Endothelial cell of umbilical vein (primary cell): ENCODE measurements at regions of chr14 and their contacts with region 1.

Region 1: DNA sequence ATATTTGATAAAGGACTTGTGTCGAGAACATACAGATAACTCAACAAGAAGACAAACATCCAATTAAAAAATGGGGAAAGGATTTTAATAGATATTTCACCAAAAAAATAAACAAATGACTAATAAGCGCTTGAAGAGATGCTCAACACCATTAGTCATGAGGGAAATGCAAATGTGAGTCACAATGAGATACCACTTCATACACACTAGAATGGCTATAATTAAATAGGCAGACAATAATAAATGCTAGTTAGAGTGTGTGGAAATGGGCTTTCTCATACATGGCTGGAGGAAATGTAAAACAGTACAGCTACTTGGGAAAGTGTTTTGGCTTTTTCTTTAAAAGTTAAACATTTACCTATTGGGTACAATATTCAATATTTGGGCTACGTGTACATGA is 34.8 kb downstream of the DLK1 start:
- DNase-seq: peak; percentile 66
- H3K4me3 ChIP-seq: no peak overlapping the region
- H3K27ac ChIP-seq: peak overlapping the region; percentile 27
- H3K4me1 ChIP-seq: peaks cover 13% of the 10 kb centered on the region
- H3K27me3 ChIP-seq: peaks cover 0 to 2% of the 10 kb centered on the region in 2 experiments
- CTCF ChIP-seq: no peak
- POLR2A ChIP-seq: no peak

Region 2: GRCh38 chr14:100692859-100693558 is 68.5 kb before region 1 on chr14:
- CTCF ChIA-PET with region 1: no interaction called
- POLR2A ChIA-PET with region 1: no interaction called
- dilution Hi-C with region 1: no loop called
- intact Hi-C with region 1: loop called (anchors 1 kb)
- DNase-seq: peak; percentile 87
- H3K4me3 ChIP-seq: no peak overlapping the region
- H3K27ac ChIP-seq: peak overlapping the region; percentile 88
- H3K4me1 ChIP-seq: peaks cover 21% of the 10 kb centered on the region
- H3K27me3 ChIP-seq: no peaks in the 10 kb centered on the region
- CTCF ChIP-seq: no peak
- POLR2A ChIP-seq: peak; percentile 68

Region 3: DNA sequence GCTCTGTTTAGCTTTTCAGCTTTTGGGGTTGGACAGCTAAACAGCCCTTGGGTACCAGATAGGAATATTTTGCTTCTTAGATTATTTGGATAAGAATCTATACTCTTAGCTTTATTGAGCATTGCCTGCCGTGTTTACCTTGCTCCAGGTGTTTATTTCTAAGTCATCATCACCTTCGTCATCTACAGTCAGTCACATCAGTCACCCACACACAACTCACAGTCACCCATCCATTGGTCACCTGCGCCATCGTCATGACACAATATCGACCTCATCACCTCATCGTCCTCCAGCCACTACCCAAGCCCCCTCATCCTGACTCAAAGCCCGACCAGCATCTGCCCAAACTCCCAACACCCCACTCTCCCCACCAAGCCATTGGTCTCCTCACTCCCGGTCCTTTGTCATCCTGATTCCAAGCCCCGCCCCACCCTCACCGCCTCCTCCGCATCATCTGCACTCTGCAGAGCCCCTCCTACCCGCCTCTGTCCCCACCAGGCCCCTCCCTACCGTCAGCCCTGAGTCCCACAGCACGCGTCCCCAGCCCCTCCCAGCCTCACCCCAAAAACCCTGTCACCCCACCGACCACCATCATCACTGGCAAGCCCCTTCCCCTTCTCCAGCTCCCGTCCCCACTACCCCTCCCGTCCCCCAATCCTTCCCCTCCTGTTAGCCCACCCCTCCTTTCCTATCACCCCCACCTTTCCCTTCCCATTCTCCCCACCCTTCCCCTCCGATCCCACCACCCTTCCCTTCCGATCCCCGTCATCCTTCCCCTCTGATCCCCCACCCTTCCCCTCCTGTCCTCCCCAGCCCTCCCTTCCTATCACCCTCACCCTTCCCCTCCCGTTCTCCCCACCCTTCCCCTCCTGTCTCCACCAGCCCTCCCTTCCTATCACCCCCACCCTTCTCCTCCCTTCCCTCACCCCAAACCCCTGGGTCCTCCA is 25.0 kb before region 1 on chr14:
- CTCF ChIA-PET with region 1: no interaction called
- POLR2A ChIA-PET with region 1: no interaction called
- dilution Hi-C with region 1: no loop called
- intact Hi-C with region 1: no loop called
- DNase-seq: no peak
- H3K4me3 ChIP-seq: no peak overlapping the region
- H3K27ac ChIP-seq: no peak overlapping the region
- H3K4me1 ChIP-seq: no peaks in the 10 kb centered on the region
- H3K27me3 ChIP-seq: no peaks in the 10 kb centered on the region
- CTCF ChIP-seq: no peak
- POLR2A ChIP-seq: no peak

Region 4: GRCh38 chr14:101120641-101121507 is 359.4 kb after region 1 on chr14:
- CTCF ChIA-PET with region 1: no interaction called
- POLR2A ChIA-PET with region 1: no interaction called
- dilution Hi-C with region 1: no loop called
- intact Hi-C with region 1: no loop called
- DNase-seq: no peak
- H3K4me3 ChIP-seq: no peak overlapping the region
- H3K27ac ChIP-seq: no peak overlapping the region
- H3K4me1 ChIP-seq: peaks cover 8% of the 10 kb centered on the region
- H3K27me3 ChIP-seq: no peaks in the 10 kb centered on the region
- CTCF ChIP-seq: no peak
- POLR2A ChIP-seq: no peak

Region 5: DNA sequence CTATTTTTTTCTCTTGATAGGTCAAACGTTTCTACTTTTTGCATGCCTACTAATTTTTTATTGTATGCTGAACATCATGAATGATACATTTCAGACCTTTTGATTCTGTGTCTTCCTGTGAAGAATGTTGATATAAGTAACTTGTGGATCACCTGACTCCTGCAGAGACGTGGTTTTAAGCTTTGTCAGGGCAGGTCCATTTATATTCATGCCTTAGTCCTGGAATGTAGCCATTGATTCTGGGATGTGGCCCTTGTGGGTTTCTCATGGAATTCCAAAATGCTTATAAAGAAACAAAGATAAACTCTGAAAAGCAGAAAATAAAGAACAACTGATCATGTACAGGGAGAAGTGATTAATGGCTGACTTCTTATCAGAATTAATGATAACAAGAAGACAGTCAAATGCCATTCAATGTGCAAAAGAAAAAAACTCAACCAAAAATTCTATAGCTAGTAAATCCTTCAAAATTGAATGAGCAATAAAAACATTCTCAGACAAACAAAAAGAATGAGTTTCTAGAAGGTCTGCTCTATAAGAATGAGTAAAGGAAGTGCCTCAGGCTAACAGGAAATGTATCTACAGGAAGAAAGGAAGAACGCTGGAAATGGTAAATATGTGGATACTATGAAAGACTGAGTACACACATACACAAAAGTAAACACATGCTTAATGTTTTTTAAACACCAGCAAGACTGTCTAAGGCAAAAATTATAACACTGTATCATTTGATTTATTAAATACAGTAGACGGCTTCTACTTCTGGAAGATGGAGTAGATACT is 515.0 kb after region 1 on chr14:
- CTCF ChIA-PET with region 1: no interaction called
- POLR2A ChIA-PET with region 1: no interaction called
- dilution Hi-C with region 1: no loop called
- intact Hi-C with region 1: no loop called
- DNase-seq: peak; percentile 36
- H3K4me3 ChIP-seq: no peak overlapping the region
- H3K27ac ChIP-seq: no peak overlapping the region
- H3K4me1 ChIP-seq: peaks cover 9% of the 10 kb centered on the region
- H3K27me3 ChIP-seq: no peaks in the 10 kb centered on the region
- CTCF ChIP-seq: no peak
- POLR2A ChIP-seq: no peak